HepG2 (cell line): ENCODE measurements at regions of chr3 and their contacts with region 1.

Region 1: DNA sequence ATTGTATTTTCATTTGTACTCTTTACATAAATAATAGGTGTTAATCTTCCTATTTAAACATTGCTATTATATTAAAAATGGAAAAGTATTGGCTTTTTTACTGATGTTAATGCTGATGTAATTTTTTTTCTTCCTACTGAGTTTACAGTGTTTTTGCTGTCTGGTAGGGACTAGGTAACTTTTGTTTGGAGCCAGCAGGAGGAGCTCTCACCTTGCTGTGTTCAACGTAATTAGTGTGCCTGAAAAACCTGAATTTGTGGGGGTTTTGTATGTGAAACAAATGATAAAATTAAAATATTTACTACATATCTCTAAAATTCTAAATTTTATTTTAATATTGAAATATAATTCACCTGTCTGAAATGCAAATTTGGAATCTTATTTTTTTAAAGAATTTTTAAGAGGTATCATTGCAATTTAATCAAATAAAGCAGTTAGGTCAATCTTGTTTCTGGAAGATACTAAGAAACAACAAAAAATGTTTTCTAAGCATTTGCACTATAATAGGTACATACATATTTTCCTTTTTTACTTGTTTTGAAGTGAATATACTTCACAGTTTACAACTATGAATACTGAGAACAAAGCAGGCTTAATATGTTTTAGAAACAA is 48.8 kb downstream of the EPHA6 start:
- DNase-seq: peak; percentile 28
- ATAC-seq: peak; percentile 66; the same call in 2 of the 3 replicates
- H3K4me3 ChIP-seq: no peak overlapping the region
- H3K27ac ChIP-seq: no peak overlapping the region
- H3K4me1 ChIP-seq: no peaks in the 10 kb centered on the region
- H3K27me3 ChIP-seq: no peaks in the 10 kb centered on the region
- CTCF ChIP-seq: peak; percentile 67
- EP300 ChIP-seq: no peak
- POLR2A ChIP-seq: no peak
- RAD21 ChIP-seq: no peak

Region 2: GRCh38 chr3:96410006-96410730 is 453.1 kb before region 1 on chr3:
- CTCF ChIA-PET with region 1: no interaction called
- POLR2A ChIA-PET with region 1: no interaction called
- in situ Hi-C with region 1: no loop called
- intact Hi-C with region 1: no loop called
- DNase-seq: no peak
- ATAC-seq: no peak
- H3K4me3 ChIP-seq: no peak overlapping the region
- H3K27ac ChIP-seq: no peak overlapping the region
- H3K4me1 ChIP-seq: no peaks in the 10 kb centered on the region
- H3K27me3 ChIP-seq: no peaks in the 10 kb centered on the region
- CTCF ChIP-seq: no peak
- EP300 ChIP-seq: no peak
- POLR2A ChIP-seq: no peak
- RAD21 ChIP-seq: no peak

Region 3: GRCh38 chr3:97138914-97139541 is 275.8 kb after region 1 on chr3:
- CTCF ChIA-PET with region 1: no interaction called
- POLR2A ChIA-PET with region 1: no interaction called
- in situ Hi-C with region 1: no loop called
- intact Hi-C with region 1: loop called (anchors 1 kb)
- DNase-seq: peak; percentile 23
- ATAC-seq: peak; percentile 82
- H3K4me3 ChIP-seq: no peak overlapping the region
- H3K27ac ChIP-seq: no peak overlapping the region
- H3K4me1 ChIP-seq: no peaks in the 10 kb centered on the region
- H3K27me3 ChIP-seq: no peaks in the 10 kb centered on the region
- CTCF ChIP-seq: 0 out of 2 replicates have a peak, but pooled peaks have one; percentile 27
- EP300 ChIP-seq: no peak
- POLR2A ChIP-seq: no peak
- RAD21 ChIP-seq: no peak

Region 4: DNA sequence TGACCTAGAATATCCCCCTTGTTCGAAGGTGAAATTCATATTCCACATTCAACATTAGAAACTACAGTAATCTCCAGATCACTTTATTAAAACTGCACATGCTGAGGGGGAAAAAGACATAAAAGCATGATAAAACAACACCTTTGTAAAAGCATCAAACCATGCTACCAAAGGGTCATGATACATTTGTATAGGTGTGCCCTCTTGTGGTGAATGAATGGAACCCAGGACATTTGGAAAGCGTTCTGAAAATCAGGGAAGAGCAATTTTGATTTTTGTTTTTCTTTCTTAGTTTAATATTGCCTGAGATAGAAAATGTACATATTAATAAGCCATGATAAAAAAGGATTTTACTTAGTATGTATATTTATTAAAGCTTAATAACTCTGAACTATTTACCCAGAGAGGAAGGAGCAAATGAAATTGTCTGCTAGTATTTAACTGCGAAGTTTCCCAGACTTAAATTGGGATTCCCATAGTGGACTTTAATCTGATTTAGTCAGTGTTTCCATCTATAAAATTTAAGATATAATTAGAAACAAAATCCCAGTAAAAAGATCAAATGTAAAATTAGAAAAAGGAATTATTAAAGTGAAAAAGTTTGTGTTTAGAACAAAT is 795.5 kb after region 1 on chr3:
- CTCF ChIA-PET with region 1: interaction called, 23 read pairs
- POLR2A ChIA-PET with region 1: no interaction called
- in situ Hi-C with region 1: loop called (anchors 10 kb)
- intact Hi-C with region 1: loop called (anchors 1 kb)
- DNase-seq: peak; percentile 21
- ATAC-seq: peak; percentile 56; the same call in 1 of the 3 replicates
- H3K4me3 ChIP-seq: no peak overlapping the region
- H3K27ac ChIP-seq: no peak overlapping the region
- H3K4me1 ChIP-seq: no peaks in the 10 kb centered on the region
- H3K27me3 ChIP-seq: no peaks in the 10 kb centered on the region
- CTCF ChIP-seq: peak; percentile 69
- EP300 ChIP-seq: no peak
- POLR2A ChIP-seq: no peak
- RAD21 ChIP-seq: no peak

Region 5: DNA sequence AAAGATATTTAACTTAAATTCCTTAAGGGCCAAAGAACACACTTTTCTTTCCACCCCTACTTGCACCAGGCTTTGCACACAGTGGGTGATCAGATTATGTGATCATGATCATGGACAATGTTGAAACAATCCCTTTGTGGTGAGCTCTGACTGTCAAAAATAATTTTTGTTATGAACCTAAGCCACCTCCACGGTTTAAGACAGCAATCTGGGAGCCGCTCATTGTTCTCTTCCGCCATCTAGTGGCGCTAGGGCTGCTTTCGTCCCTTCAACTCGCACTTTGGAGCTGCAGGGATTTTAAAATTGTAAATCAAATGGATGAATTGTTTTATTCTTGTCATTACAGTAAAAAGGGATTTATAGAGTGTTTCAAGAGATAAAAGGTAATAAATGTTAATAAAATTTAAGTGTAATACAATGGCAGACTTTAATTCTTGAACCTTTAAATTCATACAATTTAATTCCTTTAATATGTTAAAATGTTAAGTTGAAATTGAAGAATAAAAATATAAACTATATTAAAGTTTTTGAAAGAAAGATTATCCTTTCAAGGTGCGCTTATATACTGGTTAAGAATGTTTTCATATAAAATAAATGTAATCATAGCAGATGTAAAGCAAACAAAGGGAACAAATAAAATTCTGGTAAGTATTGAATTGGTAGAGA is 856.1 kb after region 1 on chr3:
- CTCF ChIA-PET with region 1: interaction called, 5 read pairs
- POLR2A ChIA-PET with region 1: no interaction called
- in situ Hi-C with region 1: no loop called
- intact Hi-C with region 1: loop called (anchors 1 kb)
- DNase-seq: peak; percentile 50
- ATAC-seq: peak; percentile 89
- H3K4me3 ChIP-seq: no peak overlapping the region
- H3K27ac ChIP-seq: no peak overlapping the region
- H3K4me1 ChIP-seq: peaks cover 9% of the 10 kb centered on the region; the same call in 1 of the 2 replicates
- H3K27me3 ChIP-seq: no peaks in the 10 kb centered on the region
- CTCF ChIP-seq: peak; percentile 79
- EP300 ChIP-seq: no peak
- POLR2A ChIP-seq: no peak
- RAD21 ChIP-seq: no peak